HEK293T (cell line): ENCODE measurements at regions of chr5 and their contacts with region 1.

Region 1: DNA sequence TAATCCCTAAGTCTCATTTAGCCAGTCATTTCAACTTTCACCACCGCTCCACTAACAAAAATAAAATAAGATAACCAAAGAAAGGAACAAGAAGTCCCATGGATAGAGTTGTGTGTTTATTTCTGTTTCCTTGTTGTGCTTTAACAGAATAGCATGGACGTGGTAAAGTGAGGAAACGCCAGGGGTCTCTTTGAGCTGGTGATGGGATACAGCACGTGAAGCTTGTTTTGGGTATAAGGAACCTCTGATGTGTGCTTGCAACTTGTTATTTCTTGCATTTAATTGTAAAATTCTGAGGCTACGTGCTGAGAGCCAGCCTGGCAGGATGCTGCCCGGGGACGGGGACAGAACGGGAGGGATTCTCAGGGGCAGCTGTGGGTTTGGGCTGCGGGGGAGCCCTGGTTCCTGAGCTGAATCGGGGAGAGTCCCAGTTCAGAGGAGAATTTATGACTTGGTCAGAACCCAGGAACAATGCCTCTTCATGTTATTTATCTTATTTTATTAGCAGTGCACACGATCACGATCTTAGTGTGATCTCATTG is 63.4 kb downstream of the ANKRD33B start:
- DNase-seq: peak; percentile 20

Region 2: DNA sequence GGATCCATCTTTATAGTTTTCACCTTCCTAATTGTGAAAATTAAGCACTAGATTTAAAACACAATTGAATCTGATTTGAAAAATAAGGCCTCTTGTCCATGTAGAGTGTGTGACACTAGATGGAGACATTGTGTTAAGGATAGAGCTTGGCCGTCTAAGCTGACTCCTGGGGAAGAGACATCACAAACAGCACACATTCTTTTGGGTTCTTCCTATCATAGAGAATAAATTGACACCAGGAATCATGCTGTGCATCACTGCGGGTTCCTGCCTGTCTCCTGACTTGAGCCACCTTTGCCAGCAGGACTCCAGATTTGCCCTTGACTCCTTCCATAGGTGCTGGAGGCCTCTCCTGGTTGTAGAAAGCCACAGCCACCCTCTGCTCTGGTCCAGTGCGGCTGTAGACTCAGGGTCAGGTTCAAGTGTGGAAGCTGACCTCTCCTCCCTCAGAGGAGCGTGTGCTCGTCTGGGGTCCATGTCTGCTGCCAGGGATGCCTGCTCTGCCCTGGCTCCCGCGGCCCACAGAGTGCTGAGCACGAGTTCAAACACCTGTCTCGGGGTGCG is 174.4 kb before region 1 on chr5:
- CTCF ChIA-PET with region 1: interaction called, 60 read pairs
- POLR2A ChIA-PET with region 1: interaction called, 4 read pairs
- DNase-seq: peak; percentile 73

Region 3: GRCh38 chr5:10501554-10502075 is 125.6 kb before region 1 on chr5:
- CTCF ChIA-PET with region 1: interaction called, 10 read pairs
- POLR2A ChIA-PET with region 1: interaction called, 4 read pairs
- DNase-seq: no peak

Region 4: DNA sequence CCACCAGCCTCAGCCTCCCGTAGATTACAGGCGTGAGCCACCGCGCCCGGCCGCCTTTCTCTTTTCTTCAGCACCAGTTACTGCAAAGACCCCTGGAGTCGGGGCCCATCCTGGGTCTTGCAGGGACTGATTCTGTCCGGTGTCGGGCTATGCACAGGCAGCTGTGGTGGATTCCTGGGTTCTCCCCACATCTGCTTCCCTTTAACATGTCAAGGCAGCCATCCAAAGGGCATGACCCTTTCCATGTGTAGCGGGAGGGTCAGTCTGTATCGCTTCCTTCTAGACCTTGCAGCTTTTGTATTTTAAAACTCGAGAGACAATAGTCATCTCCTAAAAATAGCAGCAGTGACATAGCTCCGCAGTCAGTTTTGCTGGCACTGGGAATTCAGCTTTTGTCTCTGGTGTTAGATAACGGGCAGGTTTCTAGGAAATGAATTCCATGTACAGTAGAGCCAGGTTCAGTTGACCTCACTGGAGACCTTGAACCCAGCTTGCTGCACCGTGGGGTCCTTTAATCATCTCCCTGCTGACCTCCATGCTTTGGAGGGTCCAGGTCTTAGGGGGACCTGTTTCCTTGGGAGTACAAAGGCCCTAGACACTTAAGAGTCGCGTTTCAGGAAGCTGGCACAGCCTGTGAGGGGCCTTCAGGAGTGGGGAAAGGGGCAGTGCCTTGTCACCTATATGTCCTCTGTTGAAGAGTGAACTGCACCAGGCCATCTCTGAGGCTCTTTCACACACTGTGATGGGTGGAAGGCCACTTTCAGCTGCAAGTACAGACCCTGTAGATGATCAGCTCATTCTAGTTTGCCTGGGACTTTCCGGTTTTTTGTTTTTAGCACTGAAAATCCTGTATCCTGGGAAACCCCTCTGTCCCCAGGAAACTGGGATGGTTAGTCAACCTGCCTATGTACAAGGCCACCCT is 49.6 kb before region 1 on chr5:
- CTCF ChIA-PET with region 1: interaction called, 10 read pairs
- POLR2A ChIA-PET with region 1: no interaction called
- DNase-seq: no peak

Region 5: GRCh38 chr5:10607666-10608073 is 19.6 kb before region 1 on chr5:
- CTCF ChIA-PET with region 1: interaction called, 19 read pairs
- POLR2A ChIA-PET with region 1: interaction called, 5 read pairs
- DNase-seq: no peak

Region 6: DNA sequence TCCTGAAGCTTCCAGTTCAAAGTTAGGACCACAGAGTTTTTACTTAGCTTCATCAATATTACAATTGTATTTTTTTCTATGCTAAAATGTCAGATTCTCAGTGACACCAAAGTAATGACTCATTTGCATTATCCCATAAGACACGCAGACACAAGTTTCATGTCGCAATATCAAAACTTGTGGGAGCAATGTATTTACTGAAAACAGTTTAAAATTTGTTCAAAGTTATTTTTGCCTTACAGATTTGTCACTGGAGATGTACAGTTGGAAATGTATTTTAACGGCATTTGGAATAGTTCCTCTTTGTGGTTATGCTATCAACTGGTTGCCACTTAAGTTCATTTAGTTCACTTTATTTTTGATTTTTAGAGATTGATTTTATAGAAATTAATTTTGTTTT is 170.0 kb after region 1 on chr5:
- CTCF ChIA-PET with region 1: no interaction called
- POLR2A ChIA-PET with region 1: no interaction called
- DNase-seq: no peak